ENCODE measurements at regions of chr3 and their contacts with region 1.

Region 1: DNA sequence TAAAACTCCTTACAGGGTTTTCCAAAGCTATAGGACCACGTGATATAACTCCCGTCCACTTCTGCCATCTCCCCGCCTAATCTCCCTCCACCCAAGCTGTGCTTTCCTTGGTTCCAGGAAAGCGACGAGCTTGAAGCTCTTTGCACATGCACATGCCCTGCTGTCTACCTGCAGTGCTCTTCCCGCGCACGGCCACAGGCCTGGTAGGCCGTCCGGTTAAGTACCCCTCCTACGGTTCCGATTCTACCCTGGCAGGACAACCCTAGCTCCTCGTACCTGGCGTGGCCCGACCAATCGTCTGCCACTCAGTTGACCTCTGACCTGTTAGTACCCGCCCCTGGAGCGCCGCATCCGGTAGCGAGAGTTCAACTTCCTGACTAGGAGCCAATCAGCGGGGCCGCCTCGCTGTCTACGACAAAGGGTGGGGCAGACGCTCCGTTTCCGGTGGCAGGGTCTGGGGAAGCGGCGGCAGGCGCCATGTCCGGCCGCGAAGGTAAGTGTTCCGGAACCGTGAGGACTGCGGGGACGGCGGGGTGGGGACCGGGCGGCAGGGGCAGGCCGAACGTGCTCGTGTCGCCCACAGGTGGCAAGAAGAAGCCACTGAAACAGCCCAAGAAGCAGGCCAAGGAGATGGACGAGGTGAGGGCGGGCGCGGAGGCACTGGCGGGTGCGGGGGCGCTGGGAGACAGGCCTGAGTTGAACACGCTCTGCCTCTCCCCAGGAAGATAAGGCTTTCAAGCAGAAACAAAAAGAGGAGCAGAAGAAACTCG is at the starts of genes CCDC51 and TMA7:
- DNase-seq: peak; percentile 95 to 99 (median 98)
- ATAC-seq: peak; percentile 91
- H3K4me3 ChIP-seq: peak within 1 kb of the TSS; percentile 82 to 86
- H3K4me3 Mint-ChIP-seq: peak within 1 kb of the TSS; percentile 89
- H3K27ac ChIP-seq: peak within 1 kb of the TSS; percentile 95 to 98
- H3K27ac Mint-ChIP-seq: peak within 1 kb of the TSS; percentile 97
- H3K4me1 ChIP-seq: peaks cover 21% of the 10 kb centered on the region
- H3K4me1 Mint-ChIP-seq: peaks cover 37% of the 10 kb centered on the region
- H3K27me3 ChIP-seq: no peaks in the 10 kb centered on the region
- H3K27me3 Mint-ChIP-seq: no peaks in the 10 kb centered on the region
- CTCF ChIP-seq: no peak
- total RNA-seq, gene CCDC51: 2.9 to 4.7 TPM
- total RNA-seq, gene TMA7: 279 to 297 TPM

Region 2: GRCh38 chr3:48232734-48233133 is 207.3 kb before region 1 on chr3:
- CTCF ChIA-PET with region 1: interaction called, 15 read pairs
- POLR2A ChIA-PET with region 1: no interaction called
- intact Hi-C with region 1: loop called (anchors 1 kb)
- DNase-seq: peak; percentile 31 to 75 (median 63)
- ATAC-seq: peak; percentile 95
- H3K4me3 ChIP-seq: no peak overlapping the region
- H3K4me3 Mint-ChIP-seq: no peak overlapping the region
- H3K27ac ChIP-seq: no peak overlapping the region
- H3K27ac Mint-ChIP-seq: peak overlapping the region; percentile 11
- H3K4me1 ChIP-seq: no peaks in the 10 kb centered on the region
- H3K4me1 Mint-ChIP-seq: peaks cover 9% of the 10 kb centered on the region
- H3K27me3 ChIP-seq: no peaks in the 10 kb centered on the region
- H3K27me3 Mint-ChIP-seq: no peaks in the 10 kb centered on the region
- CTCF ChIP-seq: peak; percentile 48

Region 3: GRCh38 chr3:48422270-48422669 is 17.7 kb before region 1 on chr3:
- CTCF ChIA-PET with region 1: interaction called, 53 read pairs
- POLR2A ChIA-PET with region 1: no interaction called
- intact Hi-C with region 1: no loop called
- DNase-seq: no peak
- ATAC-seq: no peak
- H3K4me3 ChIP-seq: no peak overlapping the region
- H3K4me3 Mint-ChIP-seq: no peak overlapping the region
- H3K27ac ChIP-seq: no peak overlapping the region
- H3K27ac Mint-ChIP-seq: no peak overlapping the region
- H3K4me1 ChIP-seq: no peaks in the 10 kb centered on the region
- H3K4me1 Mint-ChIP-seq: peaks cover 2% of the 10 kb centered on the region
- H3K27me3 ChIP-seq: no peaks in the 10 kb centered on the region
- H3K27me3 Mint-ChIP-seq: no peaks in the 10 kb centered on the region
- CTCF ChIP-seq: no peak

Region 4: DNA sequence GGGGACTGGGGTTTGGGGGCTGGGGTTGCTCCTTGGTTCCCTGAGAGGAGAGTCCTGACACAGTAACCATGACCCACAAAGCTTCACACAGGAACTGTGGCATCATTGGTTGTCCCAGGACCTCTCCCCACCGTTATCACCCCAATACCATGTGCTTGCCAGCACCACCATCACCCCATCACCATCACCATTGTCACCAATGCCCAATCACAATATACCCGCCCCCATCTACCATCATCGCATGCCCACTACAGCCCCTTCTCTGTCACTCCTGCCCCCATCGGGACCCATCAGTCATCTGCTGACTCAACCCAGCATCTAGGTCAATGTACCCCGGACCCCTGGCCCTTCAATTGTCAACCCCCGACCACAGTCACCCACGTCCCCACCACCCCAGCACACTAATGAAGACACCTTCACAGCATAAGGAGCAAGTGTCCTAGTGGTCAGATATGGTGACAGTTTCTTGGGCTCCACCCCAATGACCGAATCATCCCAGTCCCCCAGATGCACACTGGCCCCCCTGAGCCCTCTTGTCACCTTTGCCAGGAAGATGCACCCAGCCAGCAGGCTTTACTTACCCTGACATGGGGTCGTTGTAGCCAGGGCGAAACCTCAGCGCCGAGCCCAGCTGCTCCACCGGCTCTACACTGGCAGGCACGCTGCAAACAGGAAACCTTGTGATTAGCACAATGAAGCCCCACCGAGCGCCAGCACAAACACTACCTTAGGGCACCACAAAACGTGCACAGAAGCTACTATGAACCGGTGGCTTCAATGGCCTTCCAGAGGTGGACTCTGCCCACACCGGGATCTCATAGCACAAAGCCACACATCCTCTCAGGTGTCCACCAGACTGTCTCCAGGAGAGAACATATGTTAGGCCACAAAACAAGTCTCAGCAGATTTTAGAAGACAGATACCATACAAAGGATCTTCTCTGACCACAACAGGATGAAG is 38.9 kb after region 1 on chr3:
- CTCF ChIA-PET with region 1: interaction called, 48 read pairs
- POLR2A ChIA-PET with region 1: interaction called, 15 read pairs
- intact Hi-C with region 1: no loop called
- DNase-seq: peak in 8 of 9 experiments; percentile 56 to 87 (median 74)
- ATAC-seq: peak; percentile 80
- H3K4me3 ChIP-seq: peak overlapping the region; percentile 52 to 55
- H3K4me3 Mint-ChIP-seq: peak overlapping the region; percentile 81
- H3K27ac ChIP-seq: peak overlapping the region; percentile 58 to 84
- H3K27ac Mint-ChIP-seq: peak overlapping the region; percentile 99
- H3K4me1 ChIP-seq: peaks cover 26% of the 10 kb centered on the region
- H3K4me1 Mint-ChIP-seq: peaks cover 37% of the 10 kb centered on the region
- H3K27me3 ChIP-seq: no peaks in the 10 kb centered on the region
- H3K27me3 Mint-ChIP-seq: no peaks in the 10 kb centered on the region
- CTCF ChIP-seq: no peak

Region 5: DNA sequence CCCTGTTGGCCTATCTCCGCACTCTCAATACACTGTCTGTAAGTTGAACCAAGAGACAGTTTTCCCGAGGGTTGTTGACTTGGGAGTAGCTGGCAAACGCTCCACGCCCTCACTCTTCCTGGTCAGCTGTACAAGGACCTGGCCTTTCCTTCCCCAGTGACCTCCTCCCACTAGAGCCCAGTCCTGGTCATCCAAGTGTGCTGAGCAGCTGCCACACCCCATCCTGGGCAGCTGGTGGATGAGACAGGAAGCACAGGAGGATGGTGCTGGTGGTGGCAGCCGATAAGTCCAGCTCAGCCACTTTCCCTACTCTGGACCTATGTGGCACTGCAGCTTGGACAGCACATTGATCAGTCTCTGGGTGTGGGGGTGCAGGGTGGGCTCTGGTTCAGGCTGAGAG is 96.8 kb after region 1 on chr3:
- CTCF ChIA-PET with region 1: interaction called, 10 read pairs
- POLR2A ChIA-PET with region 1: no interaction called
- intact Hi-C with region 1: no loop called
- DNase-seq: no peak
- ATAC-seq: no peak
- H3K4me3 ChIP-seq: no peak overlapping the region
- H3K4me3 Mint-ChIP-seq: no peak overlapping the region
- H3K27ac ChIP-seq: no peak overlapping the region
- H3K27ac Mint-ChIP-seq: no peak overlapping the region
- H3K4me1 ChIP-seq: no peaks in the 10 kb centered on the region
- H3K4me1 Mint-ChIP-seq: no peaks in the 10 kb centered on the region
- H3K27me3 ChIP-seq: no peaks in the 10 kb centered on the region
- H3K27me3 Mint-ChIP-seq: no peaks in the 10 kb centered on the region
- CTCF ChIP-seq: no peak

Region 6: GRCh38 chr3:48595526-48596121 is 155.6 kb after region 1 on chr3:
- CTCF ChIA-PET with region 1: no interaction called
- POLR2A ChIA-PET with region 1: no interaction called
- intact Hi-C with region 1: no loop called
- DNase-seq: peak in 1 of 9 experiments; percentile 9
- ATAC-seq: peak; percentile 11
- H3K4me3 ChIP-seq: no peak overlapping the region
- H3K4me3 Mint-ChIP-seq: no peak overlapping the region
- H3K27ac ChIP-seq: no peak overlapping the region
- H3K27ac Mint-ChIP-seq: no peak overlapping the region
- H3K4me1 ChIP-seq: no peaks in the 10 kb centered on the region
- H3K4me1 Mint-ChIP-seq: peaks cover 10% of the 10 kb centered on the region
- H3K27me3 ChIP-seq: peaks cover 0 to 2% of the 10 kb centered on the region in 2 experiments
- H3K27me3 Mint-ChIP-seq: peaks cover 25% of the 10 kb centered on the region
- CTCF ChIP-seq: no peak

Region 7: DNA sequence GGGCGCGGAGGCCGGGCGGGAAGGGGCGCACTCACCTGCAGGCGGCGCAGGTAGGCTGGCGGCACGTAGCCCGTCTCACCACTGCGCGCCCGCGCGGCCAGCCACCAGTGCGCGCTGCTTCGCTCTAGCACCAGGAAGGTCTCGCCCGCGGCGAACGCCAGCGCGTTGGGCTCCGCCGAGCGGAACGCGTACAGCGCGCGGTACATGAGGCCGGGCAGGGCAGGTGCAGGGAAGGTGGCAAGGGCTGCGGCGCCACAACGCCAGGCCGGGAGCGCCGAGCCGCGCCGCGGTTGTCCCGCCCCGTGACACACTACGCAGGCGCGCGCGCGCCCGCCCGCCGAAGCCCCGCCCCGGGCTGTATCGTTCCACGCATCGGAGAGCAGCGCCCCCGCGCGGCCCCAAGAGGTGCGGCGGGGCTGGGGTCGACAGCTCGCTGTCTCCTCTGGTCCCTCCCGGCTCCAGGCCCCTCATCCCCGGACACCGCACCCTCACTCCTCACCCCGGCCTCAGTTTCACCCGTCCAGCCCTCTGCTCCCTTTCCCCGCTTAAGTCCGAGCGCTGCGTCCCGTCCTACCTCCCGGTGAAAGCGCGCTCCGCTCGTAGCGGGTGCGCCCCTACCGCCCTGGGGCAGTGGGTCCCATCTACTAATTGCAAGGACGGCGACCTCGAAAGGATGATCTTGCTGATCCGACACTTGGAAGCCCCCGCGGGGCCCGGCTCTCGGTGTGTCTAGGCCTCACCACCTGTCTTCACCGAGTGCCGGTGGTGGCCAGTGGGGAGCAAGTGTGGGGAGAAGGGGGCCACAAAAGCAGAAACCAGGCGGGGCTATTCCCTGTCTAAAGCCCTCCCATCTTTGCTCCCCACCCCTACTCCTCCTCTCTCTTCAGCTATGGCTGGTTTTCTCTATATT is 245.9 kb after region 1 on chr3 and contains the start of gene NCKIPSD:
- CTCF ChIA-PET with region 1: no interaction called
- POLR2A ChIA-PET with region 1: no interaction called
- intact Hi-C with region 1: loop called in 1 of 2 experiments (anchors 10 kb)
- DNase-seq: peak; percentile 81 to 97 (median 91)
- ATAC-seq: peak; percentile 92
- H3K4me3 ChIP-seq: peak within 1 kb of the TSS; percentile 63 to 85
- H3K4me3 Mint-ChIP-seq: peak within 1 kb of the TSS; percentile 93
- H3K27ac ChIP-seq: peak within 1 kb of the TSS; percentile 58 to 82
- H3K27ac Mint-ChIP-seq: peak within 1 kb of the TSS; percentile 91
- H3K4me1 ChIP-seq: peaks cover 18% of the 10 kb centered on the region
- H3K4me1 Mint-ChIP-seq: peaks cover 22% of the 10 kb centered on the region
- H3K27me3 ChIP-seq: no peaks in the 10 kb centered on the region
- H3K27me3 Mint-ChIP-seq: no peaks in the 10 kb centered on the region
- CTCF ChIP-seq: peak; percentile 93
- total RNA-seq, gene NCKIPSD: 7.7 to 8.1 TPM

Region 8: GRCh38 chr3:49313896-49314688 is 874.1 kb after region 1 on chr3:
- CTCF ChIA-PET with region 1: no interaction called
- POLR2A ChIA-PET with region 1: no interaction called
- intact Hi-C with region 1: no loop called
- DNase-seq: no peak
- ATAC-seq: no peak
- H3K4me3 ChIP-seq: no peak overlapping the region
- H3K4me3 Mint-ChIP-seq: no peak overlapping the region
- H3K27ac ChIP-seq: no peak overlapping the region
- H3K27ac Mint-ChIP-seq: peak overlapping the region; percentile 56
- H3K4me1 ChIP-seq: no peaks in the 10 kb centered on the region
- H3K4me1 Mint-ChIP-seq: peaks cover 2% of the 10 kb centered on the region
- H3K27me3 ChIP-seq: no peaks in the 10 kb centered on the region
- H3K27me3 Mint-ChIP-seq: no peaks in the 10 kb centered on the region
- CTCF ChIP-seq: no peak